Activated CD4-positive, alpha-beta memory T cell treated with anti-CD3 and anti-CD28 coated beads, Interleukin-2, amount 10 ng/mL, durations not matched to agents 7 days and 5 days (primary cell): ENCODE measurements at regions of chr1 and their contacts with region 1.

Region 1: DNA sequence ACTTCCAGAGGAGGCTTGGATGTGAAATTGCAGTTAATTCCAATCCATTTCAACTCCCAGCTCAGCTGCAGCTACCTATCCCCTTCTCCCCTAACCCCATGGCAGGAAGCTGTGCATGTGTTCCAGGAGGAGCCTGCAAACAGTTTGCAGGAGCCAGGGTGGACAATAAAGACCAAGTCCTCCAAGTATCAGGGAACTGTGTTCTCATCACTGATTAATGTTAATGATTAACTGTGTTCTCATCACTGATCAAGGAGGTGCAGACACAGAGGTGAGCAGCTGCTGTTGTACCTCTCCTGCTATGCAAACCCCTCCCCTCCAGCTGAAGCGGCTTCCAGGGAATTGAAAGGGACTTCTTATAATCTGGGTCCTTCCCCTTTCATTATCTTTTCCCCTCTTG is 19.2 kb downstream of the CLDN19 start:
- DNase-seq: no peak
- H3K4me3 Mint-ChIP-seq: no peak overlapping the region
- H3K27ac Mint-ChIP-seq: no peak overlapping the region
- H3K4me1 Mint-ChIP-seq: no peaks in the 10 kb centered on the region
- H3K27me3 Mint-ChIP-seq: peaks cover 1% of the 10 kb centered on the region

Region 2: GRCh38 chr1:42681741-42682483 is 39.0 kb before region 1 on chr1 and contains the start of gene YBX1:
- CTCF ChIA-PET with region 1: no interaction called
- POLR2A ChIA-PET with region 1: interaction called, 10 read pairs
- DNase-seq: peak; percentile 96
- H3K4me3 Mint-ChIP-seq: peak within 1 kb of the TSS; percentile 97
- H3K27ac Mint-ChIP-seq: peak within 1 kb of the TSS; percentile 96
- H3K4me1 Mint-ChIP-seq: peaks cover 48% of the 10 kb centered on the region
- H3K27me3 Mint-ChIP-seq: no peaks in the 10 kb centered on the region
- total RNA-seq, gene YBX1: 575 to 580 TPM

Region 3: DNA sequence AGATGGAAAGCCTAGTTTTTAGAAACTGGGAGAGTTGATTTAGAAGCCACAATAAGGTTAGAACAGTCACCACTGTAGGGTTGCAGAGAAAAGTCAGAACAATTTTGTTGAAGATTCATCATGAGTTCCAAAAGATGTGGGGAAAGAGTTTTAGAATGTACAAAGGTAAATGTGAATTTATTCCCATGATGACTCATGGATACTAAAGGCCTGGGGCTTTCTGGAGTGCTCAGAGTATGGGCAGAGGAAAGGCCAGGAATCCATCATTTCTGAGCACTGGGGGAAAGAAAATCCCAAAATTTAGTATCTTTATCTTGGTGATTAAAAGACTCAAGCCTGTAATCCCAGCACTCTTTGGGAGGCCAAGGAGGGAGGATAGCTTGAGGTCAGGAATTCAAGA is 20.9 kb before region 1 on chr1:
- CTCF ChIA-PET with region 1: no interaction called
- POLR2A ChIA-PET with region 1: no interaction called
- DNase-seq: no peak
- H3K4me3 Mint-ChIP-seq: no peak overlapping the region
- H3K27ac Mint-ChIP-seq: no peak overlapping the region
- H3K4me1 Mint-ChIP-seq: peaks cover 4% of the 10 kb centered on the region
- H3K27me3 Mint-ChIP-seq: no peaks in the 10 kb centered on the region